ENCODE measurements at regions of chr5 and their contacts with region 1.

Region 1: DNA sequence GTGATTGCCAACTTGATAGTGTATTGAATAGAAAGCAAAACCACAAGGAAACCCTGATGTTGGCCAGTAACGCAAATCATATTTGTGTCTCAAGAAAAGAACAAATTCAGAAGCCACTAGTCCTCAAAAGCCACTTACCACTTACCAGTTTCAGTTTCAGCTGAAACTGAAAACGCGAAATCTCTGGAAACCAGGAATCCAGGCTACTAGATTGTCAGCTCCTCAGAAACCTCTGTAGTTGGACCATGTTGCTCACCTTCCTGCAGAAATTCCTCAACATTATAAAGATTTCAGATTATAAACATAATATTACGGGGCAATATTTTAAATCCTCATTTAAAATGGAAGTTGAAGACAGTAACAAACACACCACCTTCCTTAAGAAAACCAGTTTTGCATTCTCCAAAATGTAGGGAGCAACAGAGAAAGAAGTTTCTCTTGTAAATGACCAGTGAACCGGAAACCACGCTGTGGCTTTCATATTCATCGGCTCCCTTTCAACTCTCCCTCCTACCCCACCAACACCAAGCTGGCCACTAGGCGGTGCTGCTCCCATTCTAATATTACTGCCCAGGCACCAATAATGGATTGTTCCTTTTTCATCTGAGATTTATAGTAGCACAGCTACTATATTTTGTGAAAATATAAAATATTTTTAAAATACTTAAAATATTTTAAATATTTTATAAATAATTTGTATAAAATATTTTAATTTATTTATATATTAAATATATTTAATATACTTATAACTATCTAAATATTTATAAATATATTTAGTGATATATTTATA is 8.7 kb upstream of the TMED7 start:
- DNase-seq: peak; percentile 80
- ATAC-seq: peak; percentile 100
- H3K4me3 ChIP-seq: peak overlapping the region; percentile 41
- H3K27ac ChIP-seq: no peak overlapping the region
- H3K4me1 ChIP-seq: no peaks in the 10 kb centered on the region
- H3K27me3 ChIP-seq: peaks cover 3% of the 10 kb centered on the region
- CTCF ChIP-seq: peak; percentile 95
- POLR2A ChIP-seq: no peak
- RAD21 ChIP-seq: peak; percentile 94

Region 2: DNA sequence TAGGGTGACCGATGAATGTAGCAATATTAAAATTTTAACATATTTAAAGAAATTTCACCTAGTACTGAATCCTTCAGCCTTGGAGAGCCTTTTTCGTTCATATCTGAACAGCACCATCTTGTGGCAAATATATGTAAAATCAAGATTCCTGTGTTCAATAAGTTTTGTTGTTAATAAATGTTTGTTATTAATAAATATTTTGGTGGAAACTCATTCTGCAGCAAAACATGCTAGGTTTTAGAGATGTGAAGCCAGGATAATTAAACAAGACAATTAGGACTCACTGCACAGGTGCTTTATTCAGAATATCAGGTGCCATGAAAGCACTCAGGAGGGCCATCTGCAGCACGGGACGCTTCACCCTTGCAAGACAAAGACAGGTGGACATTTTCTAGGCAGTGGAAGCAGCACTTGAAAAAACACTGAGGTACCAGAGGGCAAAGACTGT is 47.9 kb before region 1 on chr5:
- CTCF ChIA-PET with region 1: no interaction called
- POLR2A ChIA-PET with region 1: no interaction called
- dilution Hi-C with region 1: no loop called
- in situ Hi-C with region 1: no loop called
- intact Hi-C with region 1: no loop called
- DNase-seq: peak; percentile 54
- ATAC-seq: peak; percentile 52; the same call in 1 of the 2 replicates
- H3K4me3 ChIP-seq: no peak overlapping the region
- H3K27ac ChIP-seq: no peak overlapping the region
- H3K4me1 ChIP-seq: peaks cover 6% of the 10 kb centered on the region
- H3K27me3 ChIP-seq: no peaks in the 10 kb centered on the region
- CTCF ChIP-seq: peak; percentile 67
- POLR2A ChIP-seq: no peak
- RAD21 ChIP-seq: peak; percentile 77

Region 3: GRCh38 chr5:115770466-115770865 is 135.9 kb after region 1 on chr5:
- CTCF ChIA-PET with region 1: no interaction called
- POLR2A ChIA-PET with region 1: no interaction called
- dilution Hi-C with region 1: no loop called
- in situ Hi-C with region 1: no loop called
- intact Hi-C with region 1: loop called (anchors 1 kb)
- DNase-seq: peak; percentile 3
- ATAC-seq: no peak
- H3K4me3 ChIP-seq: no peak overlapping the region
- H3K27ac ChIP-seq: no peak overlapping the region
- H3K4me1 ChIP-seq: no peaks in the 10 kb centered on the region
- H3K27me3 ChIP-seq: peaks cover 1% of the 10 kb centered on the region; the same call in 1 of the 2 replicates
- CTCF ChIP-seq: peak; percentile 38
- POLR2A ChIP-seq: no peak
- RAD21 ChIP-seq: peak; percentile 27

Region 4: DNA sequence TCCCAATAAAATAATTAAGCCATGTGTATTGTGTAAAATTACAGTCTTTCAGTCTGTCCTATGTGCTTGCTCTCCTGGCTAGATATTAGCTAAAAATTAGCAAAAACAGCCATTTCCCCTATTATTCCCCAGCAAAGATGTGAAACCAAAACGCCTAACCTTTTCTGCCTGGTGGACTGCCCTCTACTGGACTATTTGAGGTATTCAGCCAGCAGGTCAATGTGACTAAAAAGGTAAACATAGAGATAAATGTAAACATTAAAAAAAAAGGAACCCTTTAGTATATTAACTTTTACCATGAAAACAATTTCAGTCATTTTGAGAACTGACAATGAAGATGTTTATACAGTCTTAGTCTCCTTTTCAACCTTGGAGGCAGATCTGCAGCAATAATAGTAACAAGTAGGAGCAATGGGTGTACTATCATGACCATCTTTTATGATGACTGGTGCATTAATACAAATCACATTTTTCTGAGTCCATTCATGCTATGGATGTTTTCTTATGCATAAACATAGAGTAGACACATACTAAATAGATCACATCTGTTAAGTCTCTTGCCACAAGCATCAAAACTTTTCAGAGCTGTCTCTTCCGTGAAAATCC is 196.7 kb after region 1 on chr5:
- CTCF ChIA-PET with region 1: interaction called, 3 read pairs
- POLR2A ChIA-PET with region 1: no interaction called
- dilution Hi-C with region 1: no loop called
- in situ Hi-C with region 1: loop called (anchors 5 kb)
- intact Hi-C with region 1: loop called (anchors 1 kb)
- DNase-seq: peak; percentile 49
- ATAC-seq: peak; percentile 66
- H3K4me3 ChIP-seq: no peak overlapping the region
- H3K27ac ChIP-seq: no peak overlapping the region
- H3K4me1 ChIP-seq: no peaks in the 10 kb centered on the region
- H3K27me3 ChIP-seq: no peaks in the 10 kb centered on the region
- CTCF ChIP-seq: peak; percentile 67
- POLR2A ChIP-seq: no peak
- RAD21 ChIP-seq: peak; percentile 55

Region 5: GRCh38 chr5:116032094-116032517 is 397.6 kb after region 1 on chr5 and contains the start of gene ARL14EPL:
- CTCF ChIA-PET with region 1: interaction called, 3 read pairs
- POLR2A ChIA-PET with region 1: no interaction called
- dilution Hi-C with region 1: no loop called
- in situ Hi-C with region 1: no loop called
- intact Hi-C with region 1: loop called (anchors 2 kb)
- DNase-seq: peak; percentile 92
- ATAC-seq: peak; percentile 98
- H3K4me3 ChIP-seq: no peak within 1 kb of the TSS
- H3K27ac ChIP-seq: no peak within 1 kb of the TSS
- H3K4me1 ChIP-seq: no peaks in the 10 kb centered on the region
- H3K27me3 ChIP-seq: no peaks in the 10 kb centered on the region
- CTCF ChIP-seq: peak; percentile 67
- POLR2A ChIP-seq: no peak
- RAD21 ChIP-seq: peak; percentile 70
- total RNA-seq, gene ARL14EPL: not detected in 2 replicates

Region 6: DNA sequence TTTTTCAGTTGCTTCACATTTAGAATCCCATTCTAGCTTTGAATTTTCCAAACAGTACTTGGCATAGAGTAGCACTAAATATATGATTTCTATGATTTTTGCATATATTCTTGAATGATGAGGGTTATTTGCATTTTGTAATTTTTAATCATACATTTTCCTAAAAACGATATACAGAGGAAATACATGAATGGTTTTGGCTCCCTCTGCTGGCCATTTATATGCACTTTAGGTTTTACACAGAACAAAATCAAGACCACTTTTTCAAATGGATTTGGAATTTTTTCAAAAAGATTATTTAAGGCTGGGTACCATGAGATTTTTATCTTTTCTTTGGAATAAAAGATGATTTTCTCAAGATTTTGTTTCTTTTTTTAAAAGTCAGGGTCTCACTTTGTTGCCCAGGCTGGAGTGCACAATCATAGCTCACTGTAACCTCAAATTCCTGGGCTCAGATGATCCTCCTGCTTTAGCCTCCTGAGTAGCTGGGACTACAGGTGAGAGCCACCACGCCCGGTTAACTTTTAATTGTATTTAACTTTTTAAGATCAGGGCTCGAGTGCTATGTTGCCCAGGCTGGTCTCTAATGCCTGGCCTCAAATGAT is 433.6 kb after region 1 on chr5:
- CTCF ChIA-PET with region 1: interaction called, 9 read pairs
- POLR2A ChIA-PET with region 1: no interaction called
- dilution Hi-C with region 1: no loop called
- in situ Hi-C with region 1: no loop called
- intact Hi-C with region 1: loop called (anchors 1 kb)
- DNase-seq: peak; percentile 72
- ATAC-seq: peak; percentile 66
- H3K4me3 ChIP-seq: no peak overlapping the region
- H3K27ac ChIP-seq: no peak overlapping the region
- H3K4me1 ChIP-seq: no peaks in the 10 kb centered on the region
- H3K27me3 ChIP-seq: peaks cover 3% of the 10 kb centered on the region; the same call in 1 of the 2 replicates
- CTCF ChIP-seq: peak; percentile 87
- POLR2A ChIP-seq: no peak
- RAD21 ChIP-seq: peak; percentile 82